ENCODE measurements at regions of chrX and their contacts with region 1.

Region 1: GRCh38 chrX:109890895-109891502 is 111.9 kb upstream of the TMEM164 start:
- DNase-seq: peak; percentile 33 to 46 (median 44)
- H3K4me3 ChIP-seq: no peak overlapping the region
- H3K4me3 Mint-ChIP-seq: peak overlapping the region in 1 of 8 donors; percentile 23
- H3K27ac ChIP-seq: no peak overlapping the region
- H3K27ac Mint-ChIP-seq: no peak overlapping the region
- H3K4me1 ChIP-seq: no peaks in the 10 kb centered on the region
- H3K4me1 Mint-ChIP-seq: peaks cover 0 to 3% (median 0%) of the 10 kb centered on the region in 4 donors
- H3K27me3 ChIP-seq: no peaks in the 10 kb centered on the region
- H3K27me3 Mint-ChIP-seq: peaks cover 0 to 4% of the 10 kb centered on the region in 2 donors

Region 2: DNA sequence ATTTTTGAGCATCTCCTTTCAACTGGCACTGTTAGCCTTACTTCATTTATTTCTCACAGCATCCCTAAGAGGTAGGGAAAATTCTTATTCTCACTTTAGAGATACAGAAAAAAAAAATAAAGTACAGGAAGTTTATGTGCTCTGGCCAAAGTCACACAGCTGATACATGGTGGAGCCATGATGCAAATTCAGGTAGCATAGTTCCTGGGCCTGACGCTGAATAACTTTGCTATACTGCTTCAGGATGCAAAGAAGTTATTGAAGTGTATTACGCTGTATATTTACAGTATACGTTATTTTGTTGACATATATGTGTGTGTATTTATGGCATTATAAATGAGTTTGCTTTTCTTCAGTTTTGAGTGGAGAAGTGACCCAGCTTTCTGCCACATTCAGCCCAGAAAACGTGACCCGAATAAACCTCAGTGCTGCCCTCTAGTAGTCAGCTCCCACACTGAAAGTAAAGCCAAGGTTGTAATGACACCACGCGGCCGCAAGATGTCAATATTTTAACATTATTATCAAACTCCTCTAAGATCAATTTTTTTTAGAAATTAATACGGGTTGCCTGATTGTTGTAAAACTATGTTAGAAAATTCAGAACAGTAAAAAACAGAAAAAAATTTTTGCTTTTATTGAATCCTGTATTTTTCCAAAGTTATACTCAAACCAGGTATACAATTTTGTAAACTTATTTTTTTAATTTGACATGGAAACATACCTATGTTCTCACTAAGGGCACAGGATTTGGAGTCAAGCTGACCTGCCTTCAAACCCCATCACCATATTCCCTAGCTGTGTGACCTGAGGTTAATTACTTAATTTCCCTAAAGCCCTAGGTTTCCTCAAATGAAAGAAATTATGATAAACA is 405.3 kb before region 1 on chrX:
- CTCF ChIA-PET with region 1: interaction called, 13 read pairs
- POLR2A ChIA-PET with region 1: no interaction called
- intact Hi-C with region 1: loop called (anchors 1 kb)
- DNase-seq: peak; percentile 52 to 70 (median 66)
- H3K4me3 ChIP-seq: no peak overlapping the region
- H3K4me3 Mint-ChIP-seq: no peak overlapping the region
- H3K27ac ChIP-seq: no peak overlapping the region
- H3K27ac Mint-ChIP-seq: no peak overlapping the region
- H3K4me1 ChIP-seq: no peaks in the 10 kb centered on the region
- H3K4me1 Mint-ChIP-seq: no peaks in the 10 kb centered on the region
- H3K27me3 ChIP-seq: no peaks in the 10 kb centered on the region
- H3K27me3 Mint-ChIP-seq: no peaks in the 10 kb centered on the region

Region 3: DNA sequence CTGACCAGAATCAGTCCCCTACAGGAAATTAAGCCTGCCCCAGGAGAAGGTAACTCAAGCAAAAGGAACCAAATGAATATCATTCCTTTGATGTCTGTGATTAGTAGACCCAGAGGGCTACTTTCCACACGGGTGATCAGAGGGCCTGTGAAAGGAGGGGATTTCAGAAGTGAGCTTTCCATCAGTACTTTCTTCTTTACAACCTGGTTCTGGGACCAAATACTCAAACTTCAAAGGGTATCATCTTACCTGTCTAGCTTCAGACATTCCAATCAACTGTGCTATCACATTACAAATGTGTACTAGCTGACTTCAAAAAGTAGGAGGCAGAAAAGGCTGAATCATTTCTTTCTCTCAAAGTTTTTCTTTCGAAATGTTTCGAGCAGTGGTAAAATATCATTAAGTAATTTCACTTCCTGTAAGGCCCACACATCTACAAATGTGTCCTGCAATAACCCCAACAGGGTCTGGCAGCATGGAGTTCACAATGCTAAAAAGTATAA is 181.8 kb before region 1 on chrX:
- CTCF ChIA-PET with region 1: interaction called, 18 read pairs
- POLR2A ChIA-PET with region 1: no interaction called
- intact Hi-C with region 1: loop called (anchors 1 kb)
- DNase-seq: no peak
- H3K4me3 ChIP-seq: no peak overlapping the region
- H3K4me3 Mint-ChIP-seq: peak overlapping the region in 5 of 8 donors; percentile 8 to 65 (median 47)
- H3K27ac ChIP-seq: no peak overlapping the region
- H3K27ac Mint-ChIP-seq: peak overlapping the region in 3 of 7 donors; percentile 5 to 69 (median 61)
- H3K4me1 ChIP-seq: peaks cover 26% of the 10 kb centered on the region
- H3K4me1 Mint-ChIP-seq: peaks cover 25 to 57% (median 41%) of the 10 kb centered on the region in 4 donors
- H3K27me3 ChIP-seq: no peaks in the 10 kb centered on the region
- H3K27me3 Mint-ChIP-seq: no peaks in the 10 kb centered on the region

Region 4: DNA sequence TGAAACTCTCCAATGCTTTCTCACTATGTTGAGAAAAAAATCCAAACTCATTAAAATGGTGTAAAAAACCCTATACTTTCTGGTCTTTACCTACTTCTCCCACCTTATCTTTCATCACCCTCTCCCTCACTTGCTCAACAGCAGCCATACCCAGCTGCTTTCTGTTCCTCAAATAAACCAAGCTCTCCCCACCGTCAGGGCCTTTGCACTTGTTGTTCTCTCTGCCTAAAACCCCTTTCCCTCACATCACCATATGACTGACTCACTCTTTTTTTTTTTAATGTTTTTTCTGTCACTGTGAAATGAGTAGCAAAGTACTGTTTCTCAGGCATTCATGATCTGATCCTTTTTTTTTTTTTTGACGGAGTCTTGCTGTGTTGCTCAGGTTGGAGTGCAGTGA is 10.4 kb before region 1 on chrX:
- CTCF ChIA-PET with region 1: interaction called, 32 read pairs
- POLR2A ChIA-PET with region 1: no interaction called
- intact Hi-C with region 1: no loop called
- DNase-seq: no peak
- H3K4me3 ChIP-seq: no peak overlapping the region
- H3K4me3 Mint-ChIP-seq: no peak overlapping the region
- H3K27ac ChIP-seq: no peak overlapping the region
- H3K27ac Mint-ChIP-seq: peak overlapping the region in 1 of 7 donors; percentile 3
- H3K4me1 ChIP-seq: no peaks in the 10 kb centered on the region
- H3K4me1 Mint-ChIP-seq: no peaks in the 10 kb centered on the region
- H3K27me3 ChIP-seq: no peaks in the 10 kb centered on the region
- H3K27me3 Mint-ChIP-seq: no peaks in the 10 kb centered on the region

Region 5: GRCh38 chrX:109911046-109911445 is 20.0 kb after region 1 on chrX:
- CTCF ChIA-PET with region 1: interaction called, 14 read pairs
- POLR2A ChIA-PET with region 1: no interaction called
- intact Hi-C with region 1: no loop called
- DNase-seq: no peak
- H3K4me3 ChIP-seq: no peak overlapping the region
- H3K4me3 Mint-ChIP-seq: no peak overlapping the region
- H3K27ac ChIP-seq: no peak overlapping the region
- H3K27ac Mint-ChIP-seq: peak overlapping the region in 1 of 7 donors; percentile 26
- H3K4me1 ChIP-seq: no peaks in the 10 kb centered on the region
- H3K4me1 Mint-ChIP-seq: no peaks in the 10 kb centered on the region
- H3K27me3 ChIP-seq: no peaks in the 10 kb centered on the region
- H3K27me3 Mint-ChIP-seq: peaks cover 2 to 3% of the 10 kb centered on the region in 2 donors